ENCODE measurements at regions of chr19 and their contacts with region 1.

Region 1: GRCh38 chr19:47697863-47698609 is 15.2 kb upstream of the EHD2 start:
- DNase-seq: peak in 1 of 2 donors; percentile 80
- H3K4me3 ChIP-seq: no peak overlapping the region
- H3K27ac ChIP-seq: no peak overlapping the region
- H3K4me1 ChIP-seq: no peaks in the 10 kb centered on the region
- H3K27me3 ChIP-seq: no peaks in the 10 kb centered on the region
- CTCF ChIP-seq: peak; percentile 95 to 99 (median 98)

Region 2: GRCh38 chr19:47284324-47284899 is 413.6 kb before region 1 on chr19:
- intact Hi-C with region 1: loop called (anchors 10 kb)
- DNase-seq: no peak
- H3K4me3 ChIP-seq: no peak overlapping the region
- H3K27ac ChIP-seq: no peak overlapping the region
- H3K4me1 ChIP-seq: peaks cover 1 to 19% of the 10 kb centered on the region in 2 donors
- H3K27me3 ChIP-seq: no peaks in the 10 kb centered on the region
- CTCF ChIP-seq: peak; percentile 72 to 96 (median 90)

Region 3: DNA sequence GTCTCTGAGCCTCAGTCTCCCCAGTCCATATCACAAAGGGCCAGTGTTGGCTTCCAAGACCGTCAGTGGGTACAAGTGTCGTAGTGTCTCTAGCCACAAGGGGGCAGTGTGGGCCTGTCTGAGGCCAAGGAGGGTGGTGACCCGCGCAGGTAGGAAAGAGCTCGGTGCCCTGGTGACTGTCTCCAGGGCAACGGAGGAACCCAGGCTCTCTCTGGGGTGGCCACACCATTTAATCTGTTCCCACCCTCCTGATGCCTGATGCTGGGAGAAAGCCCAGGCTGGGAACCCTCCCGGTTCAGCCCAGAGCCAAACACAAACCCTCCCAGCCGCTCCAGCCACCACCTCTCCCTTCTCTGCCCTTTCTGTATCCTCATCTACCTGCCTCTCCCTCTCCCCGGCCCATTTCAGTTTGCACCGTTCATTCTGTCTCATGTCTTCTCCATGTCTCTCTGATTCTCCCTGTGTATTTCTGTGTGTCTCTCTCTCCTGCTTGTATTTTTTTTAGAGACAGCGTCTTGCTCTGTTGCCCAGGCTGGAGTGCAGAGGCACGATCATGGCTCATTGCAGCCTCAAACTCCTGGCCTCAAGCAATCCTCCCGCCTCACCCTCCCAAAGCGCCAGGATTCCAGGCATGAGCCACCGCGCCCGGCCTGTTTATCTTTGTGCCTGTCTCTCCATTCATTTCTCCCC is 261.2 kb before region 1 on chr19:
- intact Hi-C with region 1: loop called (anchors 1 kb)
- DNase-seq: peak in 1 of 2 donors; percentile 86
- H3K4me3 ChIP-seq: no peak overlapping the region
- H3K27ac ChIP-seq: no peak overlapping the region
- H3K4me1 ChIP-seq: no peaks in the 10 kb centered on the region
- H3K27me3 ChIP-seq: peaks cover 5% of the 10 kb centered on the region
- CTCF ChIP-seq: peak; percentile 81 to 92 (median 92)

Region 4: DNA sequence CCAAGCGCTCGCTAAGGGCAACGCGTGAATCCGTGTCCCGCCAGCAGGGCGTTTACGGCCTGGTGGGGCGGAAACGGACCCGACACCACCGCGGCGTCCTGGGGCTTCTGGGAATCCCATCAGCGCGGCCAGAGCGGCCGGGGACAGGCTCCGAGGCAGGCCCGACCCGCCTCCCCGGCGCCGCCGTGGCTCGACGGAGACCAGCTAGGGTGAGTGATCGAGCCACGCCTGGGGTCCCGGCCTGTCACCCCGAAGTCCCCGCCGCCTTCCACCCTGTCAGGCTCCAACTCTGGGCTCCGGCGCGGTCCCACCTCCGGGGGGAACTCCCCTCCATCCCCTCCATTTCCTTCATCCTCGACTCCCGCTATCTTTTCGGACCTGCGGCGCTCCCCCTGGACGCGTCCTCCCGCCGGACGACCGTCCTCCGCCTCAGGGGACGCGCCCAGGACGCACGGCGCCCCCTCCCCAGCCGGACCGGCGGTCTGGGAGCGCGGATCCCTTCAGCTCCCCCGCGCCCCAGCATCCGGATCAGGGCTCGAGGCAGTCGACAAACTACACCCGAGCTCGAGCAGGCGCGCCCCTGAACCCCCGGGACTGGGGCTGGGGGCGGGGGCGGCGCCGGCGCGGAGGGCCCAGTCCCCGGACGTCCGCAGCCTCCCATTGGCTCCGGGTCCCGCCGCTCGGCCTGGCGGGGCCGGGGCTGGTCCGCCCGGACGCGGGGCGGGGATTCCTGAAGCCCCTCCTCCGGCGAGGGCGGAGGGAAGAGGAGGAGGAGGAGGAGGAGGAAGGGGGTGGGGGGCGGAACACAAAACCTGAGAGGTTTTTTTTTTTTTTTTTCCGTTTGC is 89.7 kb before region 1 on chr19:
- intact Hi-C with region 1: loop called (anchors 2 kb)
- DNase-seq: peak; percentile 65 to 96
- H3K4me3 ChIP-seq: peak overlapping the region; percentile 84 to 97
- H3K27ac ChIP-seq: peak overlapping the region; percentile 94 to 97
- H3K4me1 ChIP-seq: peaks cover 9 to 38% of the 10 kb centered on the region in 2 donors
- H3K27me3 ChIP-seq: no peaks in the 10 kb centered on the region
- CTCF ChIP-seq: peak; percentile 22 to 55 (median 25)

Region 5: DNA sequence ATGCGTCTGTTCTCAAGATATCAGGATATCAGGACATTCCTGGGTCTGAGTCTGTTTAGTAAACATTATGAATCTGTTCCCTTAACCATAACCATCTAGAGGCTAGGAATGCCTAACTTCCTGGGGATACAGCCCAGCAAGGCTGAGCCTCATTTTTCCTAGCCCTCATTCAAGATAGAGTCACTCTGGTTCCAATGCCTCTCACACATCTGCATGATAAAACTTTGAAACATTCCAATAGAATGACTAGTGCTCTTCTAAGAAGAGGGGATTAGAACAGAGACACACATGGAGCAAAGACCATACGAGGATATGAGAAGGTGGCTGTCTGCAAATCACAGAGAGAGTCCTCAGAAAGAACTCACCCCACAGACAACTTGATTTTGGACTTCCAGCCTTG is 366.5 kb after region 1 on chr19:
- intact Hi-C with region 1: no loop called
- DNase-seq: no peak
- H3K4me3 ChIP-seq: no peak overlapping the region
- H3K27ac ChIP-seq: no peak overlapping the region
- H3K4me1 ChIP-seq: no peaks in the 10 kb centered on the region
- H3K27me3 ChIP-seq: no peaks in the 10 kb centered on the region
- CTCF ChIP-seq: no peak